Activated naive CD4-positive, alpha-beta T cell treated with anti-CD3 and anti-CD28 coated beads for 36 hours (primary cell): ENCODE measurements at regions of chr11 and their contacts with region 1.

Region 1: DNA sequence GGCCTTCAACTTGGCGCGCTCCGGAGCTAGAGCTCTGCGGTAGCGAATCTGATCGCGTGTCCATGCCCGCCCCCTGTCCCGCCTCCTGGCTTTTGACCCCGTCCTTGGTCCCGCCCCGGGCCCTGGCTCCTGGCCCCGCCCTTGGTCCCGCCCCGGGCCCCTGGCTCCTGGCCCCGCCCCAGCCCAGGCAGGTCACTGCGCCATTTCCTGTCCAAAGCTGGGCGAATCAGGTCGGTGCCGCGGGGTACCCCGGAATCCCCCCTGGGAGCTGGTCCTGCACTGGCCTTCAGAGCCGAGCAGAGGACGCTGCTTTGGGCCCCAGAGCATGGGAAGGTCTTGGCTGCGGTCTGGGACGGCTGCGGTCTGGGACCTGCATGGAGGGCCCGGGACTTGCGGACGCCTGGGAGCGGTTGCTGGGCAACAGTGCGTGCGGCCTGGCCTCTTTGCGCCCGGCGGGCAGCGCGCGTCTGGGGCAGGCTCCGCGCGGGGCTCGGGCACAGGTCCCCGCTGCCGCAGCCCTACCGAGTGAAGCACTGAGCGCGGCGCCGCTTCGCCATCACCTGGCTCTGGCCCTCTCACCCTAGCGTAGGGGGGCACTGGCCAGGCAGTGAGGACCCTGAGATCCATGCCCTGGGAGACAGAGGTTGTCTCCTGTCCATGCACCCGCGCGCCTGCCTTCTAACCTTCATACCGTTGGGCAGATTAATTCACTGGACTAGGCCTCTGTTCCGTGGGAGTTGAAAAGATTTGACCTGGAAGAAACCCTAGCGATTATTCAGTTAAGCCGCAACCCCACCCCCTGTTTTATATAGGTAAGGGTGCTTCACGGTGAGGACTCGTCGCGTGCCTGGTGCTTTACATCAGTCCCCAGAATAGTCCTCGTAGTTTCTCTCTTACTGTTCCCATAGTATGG is at the start of gene TTC12:
- DNase-seq: peak; percentile 95
- H3K4me3 Mint-ChIP-seq: peak within 1 kb of the TSS; percentile 80
- H3K27ac Mint-ChIP-seq: peak within 1 kb of the TSS; percentile 79
- H3K4me1 Mint-ChIP-seq: peaks cover 23% of the 10 kb centered on the region
- H3K27me3 Mint-ChIP-seq: no peaks in the 10 kb centered on the region
- total RNA-seq, gene TTC12: 4.1 to 7.4 TPM

Region 2: DNA sequence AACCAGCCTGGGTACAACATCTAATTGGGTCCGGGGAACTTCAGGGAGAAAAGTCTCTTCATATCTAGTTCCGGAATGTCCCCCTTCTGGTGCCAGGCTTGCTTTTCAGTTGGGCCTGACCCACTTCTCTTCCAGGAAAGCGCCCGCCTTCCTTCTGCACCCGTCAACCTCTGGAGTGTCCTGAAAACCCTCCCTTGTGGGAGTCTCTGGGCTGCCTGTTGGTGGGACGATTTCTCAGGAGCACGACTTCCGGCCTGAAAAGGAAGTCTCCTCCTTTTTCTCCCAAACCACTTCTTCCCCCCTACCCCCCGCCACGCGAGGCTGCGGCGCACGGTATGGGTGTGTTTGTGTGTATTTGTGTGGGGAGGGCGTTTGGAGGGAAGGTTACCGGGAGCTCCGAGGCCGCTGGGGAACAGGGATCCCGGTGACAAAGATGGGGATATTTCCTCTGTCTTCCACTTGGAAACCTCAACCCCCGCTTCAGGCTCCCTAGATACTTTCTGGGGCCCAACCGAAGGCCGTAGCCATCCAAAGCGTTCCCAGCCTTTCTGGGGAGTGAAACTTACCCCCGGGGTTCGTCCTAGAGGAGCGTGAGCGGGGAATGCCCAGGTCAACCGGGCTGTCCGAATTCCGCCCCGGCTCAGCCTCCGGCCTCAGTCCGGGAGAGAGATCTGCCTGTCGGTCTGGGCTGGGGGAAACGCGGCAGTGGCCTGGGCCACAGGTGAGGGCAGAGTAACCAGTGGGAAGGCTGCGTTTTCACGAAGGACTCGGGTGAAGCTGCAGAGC is 1240.4 kb before region 1 on chr11 and contains the start of gene NKAPD1:
- CTCF ChIA-PET with region 1: no interaction called
- intact Hi-C with region 1: loop called (anchors 1 kb)
- DNase-seq: peak; percentile 86
- H3K4me3 Mint-ChIP-seq: peak within 1 kb of the TSS; percentile 97
- H3K27ac Mint-ChIP-seq: peak within 1 kb of the TSS; percentile 97
- H3K4me1 Mint-ChIP-seq: peaks cover 28% of the 10 kb centered on the region
- H3K27me3 Mint-ChIP-seq: peaks cover 6% of the 10 kb centered on the region
- total RNA-seq, gene NKAPD1: 14.8 to 19.6 TPM

Region 3: GRCh38 chr11:113587308-113587739 is 272.7 kb after region 1 on chr11:
- CTCF ChIA-PET with region 1: no interaction called
- intact Hi-C with region 1: loop called (anchors 1 kb)
- DNase-seq: peak; percentile 59
- H3K4me3 Mint-ChIP-seq: no peak overlapping the region
- H3K27ac Mint-ChIP-seq: no peak overlapping the region
- H3K4me1 Mint-ChIP-seq: peaks cover 4% of the 10 kb centered on the region
- H3K27me3 Mint-ChIP-seq: peaks cover 11% of the 10 kb centered on the region

Region 4: GRCh38 chr11:113773416-113774173 is 458.9 kb after region 1 on chr11 and contains the start of gene ZW10:
- CTCF ChIA-PET with region 1: no interaction called
- intact Hi-C with region 1: loop called (anchors 1 kb)
- DNase-seq: peak; percentile 94
- H3K4me3 Mint-ChIP-seq: peak within 1 kb of the TSS; percentile 100
- H3K27ac Mint-ChIP-seq: peak within 1 kb of the TSS; percentile 96
- H3K4me1 Mint-ChIP-seq: peaks cover 19% of the 10 kb centered on the region
- H3K27me3 Mint-ChIP-seq: no peaks in the 10 kb centered on the region
- total RNA-seq, gene ZW10: 10.7 to 11.6 TPM

Region 5: DNA sequence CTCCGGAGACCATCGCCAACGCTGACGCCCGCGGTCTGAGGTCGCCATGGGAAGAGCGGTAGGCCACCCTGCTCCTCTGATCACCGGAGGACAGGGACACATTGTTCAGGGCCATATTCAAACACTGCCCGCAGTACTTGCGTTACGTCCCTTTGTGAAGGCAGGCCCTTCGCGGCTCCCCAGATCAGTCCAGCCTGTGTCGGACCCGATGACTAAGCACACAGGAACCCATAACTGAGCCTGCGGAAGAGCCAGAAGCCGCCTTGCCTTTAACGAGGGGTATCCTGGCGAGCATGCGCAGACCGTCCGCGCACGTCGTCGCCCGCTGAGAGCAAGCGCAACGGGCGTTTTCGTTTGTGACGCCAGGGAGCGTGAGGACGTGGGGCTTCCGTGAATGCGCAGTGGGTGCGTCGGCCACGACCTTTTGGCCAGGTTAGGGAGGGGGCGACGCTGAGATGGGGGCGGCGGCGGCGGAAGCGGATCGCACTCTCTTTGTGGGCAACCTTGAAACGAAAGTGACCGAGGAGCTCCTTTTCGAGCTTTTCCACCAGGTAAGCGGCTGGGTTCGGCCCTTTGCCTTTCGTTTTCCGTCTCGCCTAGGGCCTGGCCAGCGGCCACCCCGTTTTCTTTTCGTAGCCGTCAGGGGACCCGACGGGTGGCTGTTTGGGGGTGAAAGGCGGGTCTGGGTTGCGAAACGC is 1085.7 kb after region 1 on chr11 and contains the starts of genes C11orf71 and RBM7:
- CTCF ChIA-PET with region 1: no interaction called
- intact Hi-C with region 1: loop called (anchors 10 kb)
- DNase-seq: peak; percentile 98
- H3K4me3 Mint-ChIP-seq: peak within 1 kb of the TSS; percentile 90
- H3K27ac Mint-ChIP-seq: peak within 1 kb of the TSS; percentile 97
- H3K4me1 Mint-ChIP-seq: peaks cover 44% of the 10 kb centered on the region
- H3K27me3 Mint-ChIP-seq: no peaks in the 10 kb centered on the region
- total RNA-seq, gene C11orf71: 7.5 to 7.6 TPM
- total RNA-seq, gene RBM7: 36.9 to 41.7 TPM